Dendritic cell treated with granulocyte-macrophage colony-stimulating factor and Interleukin-4, amounts not matched to agents 40 ng/mL and 50 ng/mL, for 4 days (primary cell): ENCODE measurements at regions of chr12 and their contacts with region 1.

Region 1: GRCh38 chr12:121467115-121467793 is 67.3 kb downstream of the RNF34 start:
- H3K4me3 Mint-ChIP-seq: peak overlapping the region; percentile 63
- H3K27ac Mint-ChIP-seq: no peak overlapping the region
- H3K4me1 Mint-ChIP-seq: peaks cover 69% of the 10 kb centered on the region
- H3K27me3 Mint-ChIP-seq: no peaks in the 10 kb centered on the region

Region 2: DNA sequence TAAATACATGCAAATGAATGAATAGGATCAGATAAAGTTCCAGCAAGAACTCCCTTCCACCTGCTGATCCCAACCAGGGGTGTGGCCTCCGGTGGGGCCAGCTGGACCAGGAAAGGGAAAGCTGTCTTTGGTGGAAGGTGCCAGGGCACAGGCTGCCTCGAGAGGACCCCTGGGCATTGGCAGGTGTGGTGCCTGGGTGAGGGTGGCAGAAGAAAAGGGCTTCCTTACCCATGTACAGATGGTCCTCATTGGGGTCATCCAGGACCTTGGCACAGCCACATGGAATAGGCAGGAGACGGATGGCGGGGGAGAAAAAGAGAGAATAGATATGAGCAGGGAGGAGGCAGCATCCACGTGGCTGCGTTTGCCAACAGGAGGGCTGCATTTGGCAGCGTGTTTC is 207.2 kb before region 1 on chr12:
- intact Hi-C with region 1: no loop called
- H3K4me3 Mint-ChIP-seq: no peak overlapping the region
- H3K27ac Mint-ChIP-seq: no peak overlapping the region
- H3K4me1 Mint-ChIP-seq: no peaks in the 10 kb centered on the region
- H3K27me3 Mint-ChIP-seq: no peaks in the 10 kb centered on the region

Region 3: GRCh38 chr12:121452340-121452984 is 14.8 kb before region 1 on chr12:
- intact Hi-C with region 1: loop called (anchors 2 kb)
- H3K4me3 Mint-ChIP-seq: peak overlapping the region; percentile 59
- H3K27ac Mint-ChIP-seq: peak overlapping the region; percentile 97
- H3K4me1 Mint-ChIP-seq: peaks cover 92% of the 10 kb centered on the region
- H3K27me3 Mint-ChIP-seq: no peaks in the 10 kb centered on the region

Region 4: DNA sequence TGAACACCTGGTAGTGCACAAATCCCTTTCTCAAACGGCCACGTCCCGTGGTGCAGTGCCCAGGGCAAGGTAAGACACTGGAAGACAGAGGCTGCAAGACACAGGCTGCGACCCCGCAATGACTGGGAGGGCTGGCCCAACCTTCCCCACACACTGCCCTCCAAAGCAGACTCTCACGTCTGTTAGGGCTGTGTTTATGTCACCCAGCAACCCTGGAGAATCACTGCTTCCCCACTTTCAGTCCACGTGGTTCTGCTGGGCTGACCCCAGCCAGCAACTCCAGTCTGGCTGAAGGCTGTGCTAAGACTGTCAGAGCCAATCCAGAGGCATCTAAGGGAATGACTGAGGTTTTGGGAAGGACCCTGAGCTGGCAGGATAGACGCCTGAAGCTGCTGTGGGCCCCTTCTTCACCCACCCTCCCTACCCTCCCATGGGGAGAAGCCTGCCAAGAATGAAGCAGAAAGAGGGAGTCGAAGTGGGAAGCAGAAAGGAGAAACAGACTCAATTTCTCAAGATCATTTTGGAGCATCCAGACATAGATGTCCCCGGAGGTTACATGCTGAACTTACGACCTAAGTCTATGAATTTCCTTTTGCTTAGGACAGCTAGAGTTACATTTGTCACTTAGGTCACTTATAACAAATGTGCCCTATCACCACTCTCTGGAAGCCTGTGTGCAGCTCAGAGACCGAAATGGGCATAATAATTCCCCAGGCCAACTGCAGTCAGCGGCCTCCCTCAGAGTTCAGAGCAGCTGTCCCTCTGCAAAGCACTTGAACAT is 101.9 kb after region 1 on chr12:
- intact Hi-C with region 1: no loop called
- H3K4me3 Mint-ChIP-seq: no peak overlapping the region
- H3K27ac Mint-ChIP-seq: peak overlapping the region; percentile 63
- H3K4me1 Mint-ChIP-seq: peaks cover 46% of the 10 kb centered on the region
- H3K27me3 Mint-ChIP-seq: no peaks in the 10 kb centered on the region